ENCODE measurements at regions of chr4 and their contacts with region 1.

Region 1: DNA sequence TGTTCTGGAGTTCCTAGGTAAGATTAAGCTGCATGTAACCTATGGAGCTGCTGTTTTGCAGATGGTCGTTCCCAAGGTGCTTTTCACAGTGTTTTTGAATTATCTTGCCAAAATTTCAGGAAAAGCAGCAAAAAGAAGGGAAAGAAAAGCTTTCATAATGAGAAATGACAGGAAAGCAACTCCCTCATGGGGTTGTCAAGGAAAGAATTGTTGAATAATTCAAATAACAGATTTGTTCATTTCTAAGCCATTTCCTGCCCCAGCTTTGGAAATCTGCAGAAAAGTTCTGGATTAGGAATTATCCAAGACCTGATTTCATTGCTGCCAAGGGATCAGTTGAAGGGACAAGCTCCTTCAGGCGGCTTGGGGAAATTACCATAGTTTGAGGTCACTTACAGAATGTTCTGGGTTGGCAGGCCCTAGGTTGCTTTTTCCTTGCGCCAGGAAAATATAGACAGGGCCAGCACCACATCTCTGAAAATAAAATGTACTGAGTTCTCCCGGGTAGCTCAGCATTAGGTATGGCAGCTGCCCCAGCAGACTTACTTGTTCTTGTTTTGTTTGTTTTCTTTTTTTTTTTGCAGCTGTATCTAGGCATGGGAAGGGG is 354.7 kb downstream of the STIM2 start:
- DNase-seq: peak in 1 of 2 donors; percentile 68
- H3K4me3 ChIP-seq: no peak overlapping the region
- H3K27ac ChIP-seq: peak overlapping the region; percentile 48 to 68
- H3K4me1 ChIP-seq: peaks cover 3 to 13% of the 10 kb centered on the region in 2 donors
- H3K27me3 ChIP-seq: no peaks in the 10 kb centered on the region
- CTCF ChIP-seq: no peak

Region 2: DNA sequence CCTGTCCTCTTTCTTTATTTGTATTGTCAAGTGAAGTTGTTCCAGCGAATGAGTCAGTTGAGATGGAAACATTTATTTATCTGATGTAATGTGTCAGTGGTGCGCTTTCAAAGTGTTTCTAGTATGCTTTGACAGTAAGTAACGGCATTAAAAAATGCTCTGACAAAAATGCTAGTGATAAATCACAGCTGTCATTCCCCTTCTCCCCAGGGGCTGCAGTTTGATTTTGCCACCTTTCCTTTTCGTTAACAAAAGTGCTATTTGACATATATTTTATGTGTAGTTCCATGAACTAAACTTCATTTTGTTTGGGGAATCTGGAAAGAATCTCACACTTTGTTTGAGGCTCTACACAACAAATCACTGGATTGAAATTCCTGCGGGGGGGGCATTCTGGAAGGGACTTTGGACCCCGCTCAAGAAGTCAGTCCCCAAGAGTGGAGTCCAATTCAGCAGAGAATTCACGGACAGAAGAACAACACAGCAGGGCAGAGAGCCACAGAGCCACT is 639.0 kb before region 1 on chr4:
- intact Hi-C with region 1: no loop called
- DNase-seq: no peak
- H3K4me3 ChIP-seq: no peak overlapping the region
- H3K27ac ChIP-seq: no peak overlapping the region
- H3K4me1 ChIP-seq: no peaks in the 10 kb centered on the region
- H3K27me3 ChIP-seq: no peaks in the 10 kb centered on the region
- CTCF ChIP-seq: no peak

Region 3: GRCh38 chr4:27248829-27249228 is 33.5 kb after region 1 on chr4:
- intact Hi-C with region 1: loop called (anchors 2 kb)
- DNase-seq: peak in 1 of 2 donors; percentile 64
- H3K4me3 ChIP-seq: no peak overlapping the region
- H3K27ac ChIP-seq: peak overlapping the region; percentile 80 to 90
- H3K4me1 ChIP-seq: peaks cover 6 to 25% of the 10 kb centered on the region in 2 donors
- H3K27me3 ChIP-seq: no peaks in the 10 kb centered on the region
- CTCF ChIP-seq: no peak